Right lobe of liver (tissue), 6 donors: ENCODE measurements at regions of chr10 and their contacts with region 1.

Region 1: DNA sequence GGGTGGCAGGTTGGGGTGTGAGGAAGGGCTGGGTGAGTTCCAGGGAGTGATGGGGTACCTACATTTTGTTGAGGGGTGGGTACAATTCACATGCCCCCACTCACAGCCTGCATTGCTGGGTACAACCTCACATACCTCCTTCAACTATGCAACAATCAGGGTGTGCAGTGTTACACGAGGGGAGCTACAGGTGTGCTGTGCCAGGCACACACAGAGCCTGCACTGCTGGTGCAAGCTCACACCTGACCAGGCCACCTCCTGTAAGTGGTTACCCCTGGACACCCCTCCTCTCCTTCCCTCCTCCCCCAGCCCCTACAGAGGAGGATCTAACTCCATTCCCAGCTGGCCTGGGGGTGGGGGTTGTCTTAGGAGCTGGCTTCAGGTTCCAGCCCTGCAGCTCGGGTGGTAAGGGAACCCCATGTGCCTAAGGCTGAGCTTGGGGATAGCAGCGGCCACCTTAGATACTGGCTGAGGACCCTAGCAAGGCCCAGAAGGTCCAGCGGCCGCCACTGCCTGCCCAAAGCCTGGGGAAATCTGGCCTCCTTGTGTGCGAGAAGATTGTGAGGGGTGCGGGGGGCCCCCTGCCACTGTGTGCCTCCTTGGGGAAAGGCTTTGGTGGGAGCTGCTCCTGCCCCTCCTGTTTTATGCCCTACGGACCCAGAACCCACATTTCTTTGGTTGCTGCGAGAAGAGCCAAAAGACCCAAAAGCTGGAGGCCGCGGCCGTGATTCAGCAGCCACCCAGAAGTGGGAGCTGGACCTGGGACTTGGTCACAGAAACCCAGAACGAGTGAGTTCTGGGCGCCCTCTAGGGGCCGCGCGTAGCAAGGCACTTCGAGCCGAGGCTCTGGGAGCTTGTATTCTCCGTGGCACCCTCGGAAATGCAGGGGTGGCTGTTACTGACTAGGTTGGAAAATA is 10.8 kb downstream of the TLX1 start:
- DNase-seq: peak; percentile 80 to 84 (median 84)
- ATAC-seq: peak; percentile 92 to 98 (median 96)
- H3K4me3 ChIP-seq: no peak overlapping the region
- H3K27ac ChIP-seq: no peak overlapping the region
- H3K4me1 ChIP-seq: peaks cover 0 to 4% (median 0%) of the 10 kb centered on the region in 4 donors
- H3K27me3 ChIP-seq: peaks cover 9 to 38% of the 10 kb centered on the region in 2 donors
- CTCF ChIP-seq: peak; percentile 94 to 98 (median 97)
- POLR2A ChIP-seq: no peak

Region 2: GRCh38 chr10:100791369-100792058 is 350.4 kb before region 1 on chr10:
- intact Hi-C with region 1: no loop called
- DNase-seq: no peak
- ATAC-seq: no peak
- H3K4me3 ChIP-seq: no peak overlapping the region
- H3K27ac ChIP-seq: no peak overlapping the region
- H3K4me1 ChIP-seq: no peaks in the 10 kb centered on the region
- H3K27me3 ChIP-seq: no peaks in the 10 kb centered on the region
- CTCF ChIP-seq: no peak
- POLR2A ChIP-seq: no peak

Region 3: GRCh38 chr10:101018600-101019439 is 123.1 kb before region 1 on chr10:
- intact Hi-C with region 1: no loop called
- DNase-seq: peak; percentile 67 to 78 (median 77)
- ATAC-seq: peak; percentile 65 to 76 (median 72)
- H3K4me3 ChIP-seq: no peak overlapping the region
- H3K27ac ChIP-seq: no peak overlapping the region
- H3K4me1 ChIP-seq: peaks cover 0 to 3% (median 0%) of the 10 kb centered on the region in 4 donors
- H3K27me3 ChIP-seq: no peaks in the 10 kb centered on the region
- CTCF ChIP-seq: peak; percentile 57 to 67 (median 62)
- POLR2A ChIP-seq: no peak

Region 4: DNA sequence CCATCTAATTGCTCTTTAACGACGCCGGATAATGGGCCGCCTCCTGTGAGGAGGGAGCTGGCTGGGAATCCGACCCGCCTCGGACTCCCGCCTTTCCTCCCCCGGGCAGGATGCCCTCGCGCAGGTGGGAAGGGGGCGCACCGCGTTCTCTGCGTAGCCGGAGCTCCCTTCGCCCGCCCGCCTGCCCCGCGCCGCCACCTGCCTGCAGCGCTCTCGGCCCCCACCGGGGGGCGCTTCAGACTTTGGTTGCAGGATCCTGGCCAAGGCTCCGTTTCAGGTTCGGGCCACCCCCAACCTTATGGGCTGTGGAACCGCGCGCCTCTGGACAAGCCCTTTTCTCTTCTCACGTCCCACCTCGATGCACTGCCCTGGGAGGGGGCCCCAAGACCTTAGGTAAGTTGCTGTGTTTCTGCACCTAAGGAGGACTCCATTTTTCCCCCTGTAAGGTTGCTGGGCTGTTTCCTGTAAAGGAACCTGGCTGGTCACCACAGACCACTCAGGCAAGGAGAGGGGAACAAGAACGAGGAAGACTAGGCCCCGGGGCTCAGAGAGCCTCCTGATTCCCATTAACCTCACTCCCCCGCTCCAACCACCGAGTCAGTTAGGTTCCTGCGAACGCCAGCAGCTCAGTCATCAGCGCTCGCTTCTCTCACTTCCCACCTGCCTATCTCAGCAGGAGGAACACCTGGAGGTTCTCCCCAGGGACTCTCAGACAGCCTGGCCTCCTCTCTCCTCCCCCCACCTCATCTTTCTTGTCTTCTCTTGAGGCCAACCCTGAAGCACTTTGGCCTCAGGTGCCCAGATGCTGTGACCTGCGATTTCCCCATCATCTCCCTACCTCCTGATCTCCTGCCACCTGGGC is 91.4 kb before region 1 on chr10:
- intact Hi-C with region 1: no loop called
- DNase-seq: peak; percentile 65 to 74 (median 66)
- ATAC-seq: peak; percentile 82 to 94 (median 90)
- H3K4me3 ChIP-seq: peak overlapping the region in 1 of 3 donors; percentile 19
- H3K27ac ChIP-seq: no peak overlapping the region
- H3K4me1 ChIP-seq: peaks cover 0 to 5% (median 0%) of the 10 kb centered on the region in 4 donors
- H3K27me3 ChIP-seq: peaks cover 0 to 22% of the 10 kb centered on the region in 2 donors
- CTCF ChIP-seq: peak; percentile 69 to 82 (median 76)
- POLR2A ChIP-seq: no peak

Region 5: GRCh38 chr10:101095542-101096213 is 46.2 kb before region 1 on chr10:
- intact Hi-C with region 1: loop called (anchors 5 kb)
- DNase-seq: peak; percentile 62 to 74 (median 74)
- ATAC-seq: peak; percentile 85 to 94 (median 88)
- H3K4me3 ChIP-seq: no peak overlapping the region
- H3K27ac ChIP-seq: no peak overlapping the region
- H3K4me1 ChIP-seq: peaks cover 0 to 4% (median 0%) of the 10 kb centered on the region in 4 donors
- H3K27me3 ChIP-seq: no peaks in the 10 kb centered on the region
- CTCF ChIP-seq: peak; percentile 76 to 86 (median 80)
- POLR2A ChIP-seq: no peak

Region 6: DNA sequence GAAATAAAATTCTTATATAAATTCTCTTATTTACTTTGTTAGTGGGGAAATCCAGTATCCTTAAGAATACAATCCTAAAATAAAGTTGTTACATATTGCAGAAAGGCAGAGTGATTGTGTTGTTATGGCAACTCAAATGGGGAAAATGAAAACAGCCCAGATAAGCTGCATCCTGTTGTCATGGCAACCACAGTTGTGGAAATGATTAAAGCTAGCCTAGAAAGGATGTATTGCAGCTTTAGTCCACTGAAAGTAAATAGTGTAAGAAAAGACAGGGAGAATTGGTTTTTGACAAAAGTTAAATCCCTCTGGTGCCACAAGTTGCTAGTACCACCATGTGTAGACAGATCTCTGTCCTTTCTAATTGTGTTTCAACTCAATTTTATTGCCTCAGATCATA is 255.3 kb after region 1 on chr10:
- intact Hi-C with region 1: no loop called
- DNase-seq: no peak
- ATAC-seq: peak in 1 of 4 donors; percentile 57
- H3K4me3 ChIP-seq: no peak overlapping the region
- H3K27ac ChIP-seq: no peak overlapping the region
- H3K4me1 ChIP-seq: no peaks in the 10 kb centered on the region
- H3K27me3 ChIP-seq: no peaks in the 10 kb centered on the region
- CTCF ChIP-seq: no peak
- POLR2A ChIP-seq: no peak